Activated CD8-positive, alpha-beta T cell treated with anti-CD3 and anti-CD28 coated beads for 36 hours (primary cell): ENCODE measurements at regions of chr3 and their contacts with region 1.

Region 1: GRCh38 chr3:49339945-49340800 is at the start of gene USP4:
- DNase-seq: peak; percentile 97
- ATAC-seq: peak; percentile 86
- H3K4me3 Mint-ChIP-seq: peak within 1 kb of the TSS; percentile 97
- H3K27ac Mint-ChIP-seq: peak within 1 kb of the TSS; percentile 96
- H3K4me1 Mint-ChIP-seq: peaks cover 40% of the 10 kb centered on the region
- H3K27me3 Mint-ChIP-seq: no peaks in the 10 kb centered on the region
- CTCF ChIP-seq: no peak
- total RNA-seq, gene USP4: 62.4 to 67.8 TPM

Region 2: DNA sequence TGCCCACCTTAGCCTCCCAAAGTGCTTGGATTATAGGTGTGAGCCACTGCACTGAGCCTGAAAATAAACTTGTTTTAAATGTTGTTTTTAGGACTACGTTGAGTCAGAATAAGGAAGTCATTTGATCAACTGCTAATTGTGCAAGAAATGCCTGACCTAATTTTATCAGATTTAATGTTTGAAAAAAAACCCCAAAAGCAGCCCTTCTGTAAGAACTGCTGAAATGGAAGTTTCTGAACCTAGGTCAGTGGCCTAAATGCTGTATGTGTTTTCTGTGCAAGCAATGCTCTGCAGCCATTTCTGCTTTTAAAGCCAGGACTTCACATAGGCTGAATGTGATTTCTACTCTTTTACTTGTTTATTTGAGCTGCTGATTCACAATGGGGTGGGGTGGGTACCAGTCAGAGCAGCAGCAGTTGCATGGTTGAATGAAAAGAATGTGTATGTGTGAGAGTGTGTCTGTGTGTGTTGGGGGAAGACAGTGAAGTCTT is 11.4 kb after region 1 on chr3:
- CTCF ChIA-PET with region 1: interaction called, 7 read pairs
- POLR2A ChIA-PET with region 1: interaction called, 15 read pairs
- intact Hi-C with region 1: no loop called
- DNase-seq: no peak
- ATAC-seq: no peak
- H3K4me3 Mint-ChIP-seq: no peak overlapping the region
- H3K27ac Mint-ChIP-seq: no peak overlapping the region
- H3K4me1 Mint-ChIP-seq: peaks cover 11% of the 10 kb centered on the region
- H3K27me3 Mint-ChIP-seq: no peaks in the 10 kb centered on the region
- CTCF ChIP-seq: no peak

Region 3: GRCh38 chr3:49411968-49412631 is 71.9 kb after region 1 on chr3 and contains the starts of genes RHOA and TCTA:
- CTCF ChIA-PET with region 1: interaction called, 31 read pairs
- POLR2A ChIA-PET with region 1: interaction called, 37 read pairs
- intact Hi-C with region 1: loop called (anchors 1 kb)
- DNase-seq: peak; percentile 99
- ATAC-seq: peak; percentile 87
- H3K4me3 Mint-ChIP-seq: peak within 1 kb of the TSS; percentile 89
- H3K27ac Mint-ChIP-seq: peak within 1 kb of the TSS; percentile 94
- H3K4me1 Mint-ChIP-seq: peaks cover 64% of the 10 kb centered on the region
- H3K27me3 Mint-ChIP-seq: no peaks in the 10 kb centered on the region
- CTCF ChIP-seq: no peak
- total RNA-seq, gene RHOA: 432 to 437 TPM
- total RNA-seq, gene TCTA: 10.4 to 12.4 TPM

Region 4: GRCh38 chr3:49445381-49445780 is 105.2 kb after region 1 on chr3:
- CTCF ChIA-PET with region 1: interaction called, 23 read pairs
- POLR2A ChIA-PET with region 1: interaction called, 5 read pairs
- intact Hi-C with region 1: loop called (anchors 1 kb)
- DNase-seq: no peak
- ATAC-seq: no peak
- H3K4me3 Mint-ChIP-seq: no peak overlapping the region
- H3K27ac Mint-ChIP-seq: no peak overlapping the region
- H3K4me1 Mint-ChIP-seq: peaks cover 11% of the 10 kb centered on the region
- H3K27me3 Mint-ChIP-seq: no peaks in the 10 kb centered on the region
- CTCF ChIP-seq: no peak

Region 5: GRCh38 chr3:49469936-49470713 is 130.0 kb after region 1 on chr3 and contains the start of gene DAG1:
- CTCF ChIA-PET with region 1: interaction called, 4 read pairs
- POLR2A ChIA-PET with region 1: interaction called, 14 read pairs
- intact Hi-C with region 1: no loop called
- DNase-seq: peak; percentile 96
- ATAC-seq: peak; percentile 94
- H3K4me3 Mint-ChIP-seq: peak within 1 kb of the TSS; percentile 94
- H3K27ac Mint-ChIP-seq: peak within 1 kb of the TSS; percentile 83
- H3K4me1 Mint-ChIP-seq: peaks cover 19% of the 10 kb centered on the region
- H3K27me3 Mint-ChIP-seq: no peaks in the 10 kb centered on the region
- CTCF ChIP-seq: no peak
- total RNA-seq, gene DAG1: 10.8 to 14.4 TPM

Region 6: DNA sequence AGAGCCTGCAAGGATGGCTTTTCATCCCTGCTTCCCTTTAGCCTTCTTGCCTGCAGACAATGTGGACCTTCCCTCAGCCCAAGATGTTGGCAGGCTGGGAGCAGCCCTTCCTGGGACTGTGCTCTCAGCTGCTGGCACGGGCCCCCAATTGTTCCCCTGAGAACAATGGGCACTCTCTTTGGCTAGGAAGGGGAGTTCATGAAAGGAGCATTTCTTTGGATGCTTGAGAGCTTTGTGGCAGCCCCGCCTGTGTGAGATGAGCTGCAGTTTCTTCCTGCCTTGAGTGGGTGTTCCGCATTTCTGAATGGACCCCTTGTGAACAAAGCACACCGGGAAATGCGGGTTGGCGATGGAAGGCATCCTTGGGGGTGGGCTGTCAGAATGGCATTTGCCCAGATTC is 179.1 kb after region 1 on chr3:
- CTCF ChIA-PET with region 1: no interaction called
- POLR2A ChIA-PET with region 1: no interaction called
- intact Hi-C with region 1: no loop called
- DNase-seq: no peak
- ATAC-seq: no peak
- H3K4me3 Mint-ChIP-seq: no peak overlapping the region
- H3K27ac Mint-ChIP-seq: no peak overlapping the region
- H3K4me1 Mint-ChIP-seq: peaks cover 5% of the 10 kb centered on the region
- H3K27me3 Mint-ChIP-seq: no peaks in the 10 kb centered on the region
- CTCF ChIP-seq: no peak